ENCODE measurements at regions of chr3 and their contacts with region 1.

Region 1: GRCh38 chr3:111859974-111860859 is 1.2 kb downstream of the PHLDB2 start:
- DNase-seq: peak; percentile 87
- ATAC-seq: peak; percentile 62
- H3K4me3 ChIP-seq: peak overlapping the region; percentile 77
- H3K27ac ChIP-seq: peak overlapping the region; percentile 95
- H3K4me1 ChIP-seq: peaks cover under 1% of the 10 kb centered on the region; the same call in 1 of the 2 replicates
- H3K27me3 ChIP-seq: no peaks in the 10 kb centered on the region
- CTCF ChIP-seq: peak; percentile 57
- POLR2A ChIP-seq: peak; percentile 58; the same call in 1 of the 2 replicates
- RAD21 ChIP-seq: peak; percentile 69

Region 2: DNA sequence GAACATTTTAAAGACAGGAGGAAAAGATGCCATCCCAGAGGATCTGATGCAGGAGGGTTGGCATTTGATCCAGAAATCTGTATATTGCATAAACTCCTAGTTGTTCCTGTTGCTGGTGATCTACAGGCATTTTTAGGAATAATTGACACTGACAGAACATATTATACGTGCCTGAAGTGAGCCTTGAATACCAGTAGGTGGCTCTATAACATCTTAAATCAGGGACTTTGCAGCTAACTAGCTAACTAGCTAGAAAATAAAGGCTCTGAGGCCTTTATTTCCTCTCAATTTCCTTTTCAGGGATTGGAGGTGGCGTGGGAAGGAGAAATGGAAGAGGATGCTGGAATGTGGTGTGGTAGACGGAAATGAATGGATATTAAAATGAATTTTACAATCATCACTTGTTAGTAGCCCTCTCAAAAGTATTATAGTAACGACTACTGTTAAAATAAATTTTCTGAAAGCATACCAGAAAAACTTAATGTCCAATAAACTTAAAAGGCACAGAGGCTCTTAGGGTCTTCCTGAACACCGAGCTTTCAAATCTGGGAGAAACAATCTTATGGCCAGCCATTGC is 191.2 kb before region 1 on chr3:
- CTCF ChIA-PET with region 1: no interaction called
- POLR2A ChIA-PET with region 1: no interaction called
- dilution Hi-C with region 1: no loop called
- in situ Hi-C with region 1: no loop called
- intact Hi-C with region 1: loop called (anchors 2 kb)
- DNase-seq: peak; percentile 76
- ATAC-seq: peak; percentile 76
- H3K4me3 ChIP-seq: no peak overlapping the region
- H3K27ac ChIP-seq: no peak overlapping the region
- H3K4me1 ChIP-seq: peaks cover 5% of the 10 kb centered on the region
- H3K27me3 ChIP-seq: no peaks in the 10 kb centered on the region
- CTCF ChIP-seq: peak; percentile 88
- POLR2A ChIP-seq: no peak
- RAD21 ChIP-seq: peak; percentile 87

Region 3: DNA sequence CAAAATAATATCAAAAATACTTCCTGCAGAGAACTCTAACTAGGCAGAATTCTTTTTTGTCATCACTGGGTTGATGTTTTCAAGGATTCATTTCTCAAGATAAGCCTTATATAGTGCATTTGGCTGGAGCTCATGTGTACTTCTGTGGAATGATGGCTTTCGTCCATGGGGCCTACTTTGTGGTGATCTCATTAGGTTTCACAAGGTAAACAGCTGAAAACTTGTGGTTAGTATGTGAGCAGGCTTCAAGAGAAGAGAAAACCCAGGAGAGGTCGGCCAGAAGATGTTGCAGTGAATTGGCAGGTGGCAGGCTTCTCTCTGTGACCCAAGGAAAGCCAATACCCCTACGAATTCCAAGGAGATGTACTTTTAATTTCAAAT is 122.5 kb before region 1 on chr3:
- CTCF ChIA-PET with region 1: interaction called, 11 read pairs
- POLR2A ChIA-PET with region 1: no interaction called
- dilution Hi-C with region 1: no loop called
- in situ Hi-C with region 1: no loop called
- intact Hi-C with region 1: loop called (anchors 5 kb)
- DNase-seq: peak; percentile 98
- ATAC-seq: peak; percentile 65
- H3K4me3 ChIP-seq: no peak overlapping the region
- H3K27ac ChIP-seq: no peak overlapping the region
- H3K4me1 ChIP-seq: peaks cover 19% of the 10 kb centered on the region
- H3K27me3 ChIP-seq: peaks cover 13% of the 10 kb centered on the region
- CTCF ChIP-seq: no peak
- POLR2A ChIP-seq: no peak
- RAD21 ChIP-seq: peak; percentile 13; the same call in 1 of the 2 replicates

Region 4: DNA sequence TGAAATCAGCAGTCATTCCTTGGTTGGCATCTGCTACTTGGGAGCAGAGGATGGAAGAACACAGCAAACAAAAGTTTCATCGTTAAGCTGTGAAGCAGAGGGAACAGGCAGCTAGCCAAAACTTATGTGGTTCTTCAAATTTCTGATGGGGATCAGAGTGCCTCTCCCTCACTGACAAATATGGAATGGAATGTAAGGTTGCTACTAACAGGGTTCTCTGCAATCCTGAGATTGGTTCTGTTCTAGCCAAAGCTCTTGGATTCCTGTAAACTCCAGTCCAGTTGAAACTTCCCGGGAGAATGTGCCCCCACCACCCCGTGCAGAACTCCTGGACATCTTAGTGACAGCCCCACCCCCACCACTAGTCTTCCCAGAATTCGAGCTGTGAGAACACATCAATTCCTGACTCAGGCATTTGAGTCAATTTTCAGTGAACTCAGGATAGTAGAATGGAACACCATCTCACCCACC is 57.1 kb before region 1 on chr3:
- CTCF ChIA-PET with region 1: interaction called, 4 read pairs
- POLR2A ChIA-PET with region 1: no interaction called
- dilution Hi-C with region 1: no loop called
- in situ Hi-C with region 1: no loop called
- intact Hi-C with region 1: loop called (anchors 2 kb)
- DNase-seq: peak; percentile 97
- ATAC-seq: peak; percentile 95
- H3K4me3 ChIP-seq: no peak overlapping the region
- H3K27ac ChIP-seq: peak overlapping the region; percentile 59
- H3K4me1 ChIP-seq: peaks cover 4% of the 10 kb centered on the region
- H3K27me3 ChIP-seq: no peaks in the 10 kb centered on the region
- CTCF ChIP-seq: no peak
- POLR2A ChIP-seq: no peak
- RAD21 ChIP-seq: no peak; the same call in 1 of the 2 replicates

Region 5: DNA sequence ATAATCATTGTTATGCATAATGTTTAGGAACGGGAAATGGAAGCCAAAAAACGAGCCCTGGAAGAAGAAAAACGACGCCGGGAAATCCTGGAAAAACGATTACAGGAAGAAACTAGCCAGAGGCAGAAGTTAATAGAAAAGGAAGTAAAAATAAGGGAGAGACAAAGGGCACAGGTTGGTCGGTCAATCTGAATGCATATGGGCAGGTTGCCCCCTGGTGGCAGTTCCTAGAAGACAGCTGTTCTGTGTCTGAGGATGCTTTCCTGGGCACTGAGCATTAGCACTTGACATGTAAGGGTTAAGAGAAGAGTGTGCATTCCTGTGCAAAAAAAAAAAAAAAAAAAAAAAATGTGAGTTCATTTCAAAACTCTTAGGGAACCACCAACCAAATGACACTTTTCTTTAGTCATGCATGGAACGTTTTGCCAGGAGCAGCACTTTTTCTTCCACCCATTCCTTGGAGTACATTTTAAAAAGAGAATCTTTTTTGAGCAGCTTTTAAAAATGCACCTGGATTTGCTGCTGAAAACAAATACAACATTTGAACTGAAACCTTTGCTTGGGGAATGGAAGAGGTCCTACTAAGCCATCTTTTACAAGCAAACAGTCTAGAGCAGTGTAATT is 107.5 kb after region 1 on chr3:
- CTCF ChIA-PET with region 1: interaction called, 8 read pairs
- POLR2A ChIA-PET with region 1: no interaction called
- dilution Hi-C with region 1: no loop called
- in situ Hi-C with region 1: no loop called
- intact Hi-C with region 1: loop called (anchors 1 kb)
- DNase-seq: peak; percentile 83
- ATAC-seq: peak; percentile 90
- H3K4me3 ChIP-seq: no peak overlapping the region
- H3K27ac ChIP-seq: no peak overlapping the region
- H3K4me1 ChIP-seq: peaks cover 1% of the 10 kb centered on the region; the same call in 1 of the 2 replicates
- H3K27me3 ChIP-seq: no peaks in the 10 kb centered on the region
- CTCF ChIP-seq: peak; percentile 90
- POLR2A ChIP-seq: peak; percentile 39; the same call in 1 of the 2 replicates
- RAD21 ChIP-seq: peak; percentile 96

Measured in IMR-90 (cell line).